GM10248 (cell line): ENCODE measurements at regions of chr17 and their contacts with region 1.

Region 1: DNA sequence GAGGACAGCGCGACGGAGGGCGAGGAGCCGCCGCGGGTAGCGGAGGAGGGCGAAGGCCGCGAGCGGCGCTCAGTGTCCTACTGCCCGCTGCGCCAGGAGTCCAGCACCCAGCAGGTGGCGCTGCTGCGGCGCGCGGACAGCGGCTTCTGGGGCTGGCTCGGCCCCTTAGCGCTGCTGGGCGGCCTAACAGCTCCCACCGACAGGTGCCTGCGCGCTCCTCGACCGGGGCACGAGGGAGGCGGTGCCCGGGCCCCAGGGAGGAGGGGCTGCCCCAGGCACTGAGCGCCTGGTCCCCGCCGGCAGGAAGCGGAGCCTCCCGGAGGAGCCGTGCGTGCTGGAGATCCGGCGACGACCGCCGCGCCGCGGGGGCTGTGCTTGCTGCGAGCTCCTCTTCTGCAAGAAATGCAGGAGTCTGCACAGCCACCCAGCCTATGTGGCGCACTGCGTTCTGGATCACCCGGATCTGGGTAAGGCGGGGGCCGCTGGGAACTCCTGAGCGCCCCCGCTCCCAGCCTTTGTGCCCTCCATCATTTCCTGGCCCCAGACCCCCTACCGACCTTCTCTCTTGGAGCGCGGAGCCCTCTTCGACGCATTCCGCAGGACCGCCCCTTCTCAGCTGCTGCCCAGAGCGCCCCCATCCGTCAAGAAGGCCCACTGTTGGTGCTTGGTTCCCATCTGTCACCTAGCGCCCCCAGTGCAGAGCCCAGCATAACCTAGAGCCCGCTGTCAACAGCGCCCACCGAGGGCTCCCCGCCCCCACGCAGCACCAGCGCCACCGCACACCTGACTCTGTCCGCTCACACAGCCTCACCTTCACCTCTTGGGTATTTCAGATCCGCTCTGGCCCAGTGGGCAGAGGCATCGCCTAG is 3.7 kb downstream of the C17orf50 start:
- DNase-seq: peak; percentile 95
- CTCF ChIP-seq: peak; percentile 97

Region 2: GRCh38 chr17:35568541-35568940 is 195.8 kb before region 1 on chr17:
- CTCF ChIA-PET with region 1: no interaction called
- POLR2A ChIA-PET with region 1: no interaction called
- DNase-seq: peak; percentile 26
- CTCF ChIP-seq: no peak

Region 3: GRCh38 chr17:35709874-35710273 is 54.5 kb before region 1 on chr17:
- CTCF ChIA-PET with region 1: interaction called, 10 read pairs
- POLR2A ChIA-PET with region 1: no interaction called
- DNase-seq: no peak
- CTCF ChIP-seq: no peak

Region 4: DNA sequence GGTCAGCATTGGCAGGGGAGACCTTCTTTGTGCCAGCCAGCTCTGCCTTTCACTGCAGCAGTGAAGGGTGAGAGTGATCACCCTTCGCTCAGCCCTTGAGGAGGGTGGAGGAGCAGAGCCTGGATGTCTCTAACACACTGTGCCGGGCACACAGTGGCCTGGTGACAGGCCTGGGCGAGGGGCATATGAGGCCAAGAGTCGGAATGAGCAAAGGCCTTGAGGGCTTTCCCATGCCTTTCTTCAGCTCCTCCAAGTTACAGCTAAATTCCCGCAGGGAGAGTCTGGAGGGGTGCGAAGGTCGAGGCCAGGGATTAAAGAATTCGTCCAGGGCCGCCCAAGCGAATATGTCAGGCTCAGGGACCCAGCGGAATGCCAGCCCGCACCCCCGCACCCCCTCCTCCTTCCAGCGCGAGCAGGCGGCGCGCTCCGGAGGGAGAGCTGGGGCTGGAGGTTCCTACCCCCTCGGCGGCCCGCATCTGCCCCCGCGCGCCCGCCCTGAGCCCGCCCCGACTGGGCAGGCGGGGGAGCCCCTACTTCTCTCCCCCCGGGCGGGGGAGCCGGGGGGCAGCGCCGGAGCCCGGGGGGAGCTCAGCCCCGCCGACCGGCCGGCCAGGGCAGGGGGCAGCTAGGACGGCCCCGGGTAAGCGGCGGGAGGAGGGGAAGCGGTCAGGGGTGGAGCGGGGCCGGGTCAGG is 33.0 kb before region 1 on chr17 and contains the start of gene RASL10B:
- CTCF ChIA-PET with region 1: interaction called, 11 read pairs
- POLR2A ChIA-PET with region 1: no interaction called
- DNase-seq: peak; percentile 53
- CTCF ChIP-seq: no peak

Region 5: DNA sequence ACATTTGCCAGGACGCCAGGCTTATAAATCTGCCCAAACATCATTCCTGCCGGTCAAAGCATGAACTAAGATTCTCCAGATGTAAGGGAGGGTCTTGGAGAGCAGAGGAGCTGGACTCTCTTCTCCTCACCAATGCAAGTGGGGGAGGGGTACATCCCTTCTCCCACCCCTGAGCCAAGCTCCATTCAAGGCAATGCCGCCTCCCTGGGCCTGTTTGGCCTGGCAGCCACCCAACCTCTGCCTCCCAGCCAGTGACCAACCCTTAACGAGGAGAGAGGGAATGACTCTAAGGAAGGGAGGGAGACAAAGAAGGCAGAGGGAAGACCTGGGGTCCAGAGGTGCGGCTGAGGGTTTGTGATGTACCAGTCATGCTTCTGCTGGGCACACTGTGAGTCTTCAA is 10.1 kb after region 1 on chr17:
- CTCF ChIA-PET with region 1: interaction called, 18 read pairs
- POLR2A ChIA-PET with region 1: no interaction called
- DNase-seq: no peak
- CTCF ChIP-seq: no peak

Region 6: DNA sequence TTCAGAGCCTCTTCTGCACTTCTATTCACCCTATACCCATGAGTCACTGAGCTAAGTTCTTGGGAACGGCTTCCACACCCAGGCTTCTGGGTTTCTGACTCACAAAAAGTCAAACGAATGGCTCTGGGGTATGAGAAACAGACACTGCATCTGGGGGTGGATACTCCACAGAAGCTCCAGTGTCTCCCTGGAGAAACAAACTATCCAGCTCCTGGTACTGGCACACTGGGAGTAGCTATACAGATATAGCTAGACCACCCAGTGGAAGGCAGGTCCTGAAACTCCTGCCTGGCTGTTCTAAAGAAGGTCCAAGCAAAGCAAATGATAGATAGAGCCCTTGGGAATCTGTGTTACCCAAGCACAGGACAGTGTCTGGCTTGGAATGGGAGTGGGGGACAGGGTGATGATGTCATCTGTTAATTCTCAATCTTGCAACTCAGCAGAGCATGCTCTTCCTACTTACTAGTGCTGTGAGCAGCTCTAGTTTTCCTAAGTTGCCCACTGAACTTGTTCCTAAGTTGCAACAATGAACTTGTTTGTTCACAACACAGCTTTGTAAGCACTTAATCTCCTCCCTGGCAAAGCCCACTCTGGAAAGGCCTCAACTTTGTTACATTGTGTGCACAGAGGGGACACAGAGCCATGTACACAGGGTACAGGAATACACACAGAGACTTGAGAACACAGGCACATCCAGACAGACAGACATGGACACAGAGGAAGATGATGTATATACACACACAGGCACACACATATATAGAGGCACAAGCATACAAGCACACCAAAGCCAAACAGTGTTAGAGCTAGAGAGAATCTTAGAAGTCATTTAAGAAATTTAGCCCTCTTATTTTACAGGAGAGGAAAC is 24.4 kb after region 1 on chr17:
- CTCF ChIA-PET with region 1: interaction called, 17 read pairs
- POLR2A ChIA-PET with region 1: no interaction called
- DNase-seq: no peak
- CTCF ChIP-seq: no peak

Region 7: GRCh38 chr17:35808962-35809854 is 44.9 kb after region 1 on chr17 and contains the start of gene TAF15:
- CTCF ChIA-PET with region 1: interaction called, 222 read pairs
- POLR2A ChIA-PET with region 1: interaction called, 4 read pairs
- DNase-seq: peak; percentile 96
- CTCF ChIP-seq: peak; percentile 69